Tibial artery (tissue), 4 donors: ENCODE measurements at regions of chr5 and their contacts with region 1.

Region 1: DNA sequence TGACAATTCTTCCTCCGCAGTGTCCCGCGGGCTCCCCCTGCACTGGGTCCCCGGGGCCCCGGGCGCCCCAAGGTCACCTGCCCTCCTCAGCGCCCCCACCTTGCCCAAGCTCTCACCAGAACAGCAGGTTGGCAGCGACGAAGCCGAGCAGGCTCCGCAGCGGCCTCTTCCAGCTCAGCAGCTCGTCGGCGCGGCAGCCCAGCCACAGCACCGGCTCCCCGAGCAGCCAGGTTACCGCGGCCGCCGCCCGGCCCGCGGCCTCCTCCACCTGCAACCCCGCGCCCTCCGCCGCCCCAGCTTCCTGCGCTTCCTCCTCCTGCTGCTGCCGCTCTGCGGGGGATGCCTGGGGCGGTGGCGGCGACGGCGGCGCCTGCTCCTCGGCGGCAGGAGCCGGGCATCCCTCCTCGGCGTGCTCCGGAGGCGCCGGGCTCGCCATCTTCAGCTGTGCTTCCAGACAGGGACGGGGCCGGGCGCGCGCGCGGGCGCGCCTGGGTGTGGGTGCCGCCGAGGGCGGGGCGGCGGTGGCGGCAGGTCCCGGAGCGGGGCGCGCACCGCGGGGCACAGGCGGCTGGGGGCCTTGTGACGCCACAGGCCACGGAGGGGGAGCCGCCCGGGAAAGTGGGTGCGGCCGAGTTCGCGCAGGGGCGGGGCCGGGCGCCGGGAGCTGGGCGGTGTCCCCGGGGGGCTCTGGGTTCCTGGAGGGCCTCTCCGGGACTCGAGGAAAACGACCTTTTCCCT is at the start of gene RETREG1:
- DNase-seq: peak; percentile 45 to 71
- H3K4me3 ChIP-seq: peak within 1 kb of the TSS; percentile 53 to 66
- H3K27ac ChIP-seq: peak within 1 kb of the TSS; percentile 13 to 17
- H3K4me1 ChIP-seq: peaks cover 4 to 14% (median 10%) of the 10 kb centered on the region in 4 donors
- H3K27me3 ChIP-seq: peaks cover 0 to 2% of the 10 kb centered on the region in 2 donors
- CTCF ChIP-seq: no peak

Region 2: DNA sequence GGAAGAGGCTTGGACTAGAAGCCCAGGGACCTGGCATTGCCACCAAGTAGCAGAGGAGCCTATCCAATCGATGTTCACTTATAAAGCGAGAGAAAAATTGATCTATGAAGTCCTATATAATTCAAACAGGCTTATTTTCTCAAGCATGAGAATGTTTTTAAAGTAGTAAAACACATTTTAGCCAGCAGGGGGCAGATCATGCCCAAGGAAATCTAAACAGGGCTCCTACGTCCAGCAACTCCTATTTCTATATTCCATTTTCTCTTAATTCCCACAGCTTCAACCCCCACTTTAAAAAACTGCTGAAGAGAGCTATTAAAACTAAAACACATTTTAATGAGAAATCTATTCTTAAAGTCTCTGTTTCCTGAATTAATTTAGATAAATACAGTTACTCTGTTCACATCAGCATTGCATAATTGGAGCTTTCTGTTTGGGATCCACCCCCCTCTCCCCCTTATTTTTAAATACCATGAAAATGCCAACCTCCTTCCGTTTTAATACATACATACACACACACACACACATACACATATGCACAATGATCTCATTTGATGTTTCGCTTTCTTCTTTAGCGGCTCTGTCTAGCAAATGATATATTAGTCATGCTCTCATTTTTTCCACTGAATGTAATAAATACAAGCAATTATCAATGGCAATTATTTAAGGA is 174.5 kb after region 1 on chr5:
- intact Hi-C with region 1: no loop called
- DNase-seq: no peak
- H3K4me3 ChIP-seq: no peak overlapping the region
- H3K27ac ChIP-seq: no peak overlapping the region
- H3K4me1 ChIP-seq: peaks cover 0 to 6% (median 2%) of the 10 kb centered on the region in 4 donors
- H3K27me3 ChIP-seq: no peaks in the 10 kb centered on the region
- CTCF ChIP-seq: peak; percentile 70 to 79

Region 3: GRCh38 chr5:16881251-16881650 is 264.5 kb after region 1 on chr5:
- intact Hi-C with region 1: no loop called
- DNase-seq: no peak
- H3K4me3 ChIP-seq: no peak overlapping the region
- H3K27ac ChIP-seq: peak overlapping the region; percentile 82 to 84
- H3K4me1 ChIP-seq: peaks cover 0 to 81% (median 52%) of the 10 kb centered on the region in 4 donors
- H3K27me3 ChIP-seq: no peaks in the 10 kb centered on the region
- CTCF ChIP-seq: no peak

Region 4: GRCh38 chr5:18236386-18236785 is 1619.7 kb after region 1 on chr5:
- intact Hi-C with region 1: loop called (anchors 5 kb)
- DNase-seq: no peak
- H3K4me3 ChIP-seq: no peak overlapping the region
- H3K27ac ChIP-seq: no peak overlapping the region
- H3K4me1 ChIP-seq: no peaks in the 10 kb centered on the region
- H3K27me3 ChIP-seq: no peaks in the 10 kb centered on the region
- CTCF ChIP-seq: no peak